Naive thymus-derived CD8-positive, alpha-beta T cell (primary cell): ENCODE measurements at regions of chr12 and their contacts with region 1.

Region 1: DNA sequence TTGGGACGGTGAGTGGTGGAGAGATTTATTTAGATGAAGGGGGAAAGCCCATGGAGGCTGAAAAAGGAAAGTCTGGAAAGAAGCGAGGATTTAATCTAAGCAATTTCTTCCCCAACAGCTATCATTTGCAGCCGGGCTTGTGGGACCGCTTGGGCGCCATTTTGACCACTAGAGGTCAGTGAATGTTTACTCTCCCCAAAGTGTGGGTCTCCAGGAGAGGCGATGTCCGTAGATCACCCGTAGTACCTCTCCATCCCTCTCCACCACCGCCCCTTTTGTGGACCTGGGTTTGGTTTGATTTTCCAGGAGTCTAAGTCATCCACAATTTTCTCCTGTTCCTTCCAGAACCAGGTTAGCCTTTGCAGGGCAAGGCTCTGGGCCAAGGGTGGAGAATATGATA is 91.2 kb upstream of the PARP11 start:
- DNase-seq: no peak
- ATAC-seq: no peak
- H3K4me3 Mint-ChIP-seq: no peak overlapping the region
- H3K27ac Mint-ChIP-seq: peak overlapping the region in 5 of 10 donors; percentile 1 to 81 (median 48)
- H3K4me1 Mint-ChIP-seq: peaks cover 19 to 34% (median 25%) of the 10 kb centered on the region in 4 donors
- H3K27me3 Mint-ChIP-seq: no peaks in the 10 kb centered on the region

Region 2: DNA sequence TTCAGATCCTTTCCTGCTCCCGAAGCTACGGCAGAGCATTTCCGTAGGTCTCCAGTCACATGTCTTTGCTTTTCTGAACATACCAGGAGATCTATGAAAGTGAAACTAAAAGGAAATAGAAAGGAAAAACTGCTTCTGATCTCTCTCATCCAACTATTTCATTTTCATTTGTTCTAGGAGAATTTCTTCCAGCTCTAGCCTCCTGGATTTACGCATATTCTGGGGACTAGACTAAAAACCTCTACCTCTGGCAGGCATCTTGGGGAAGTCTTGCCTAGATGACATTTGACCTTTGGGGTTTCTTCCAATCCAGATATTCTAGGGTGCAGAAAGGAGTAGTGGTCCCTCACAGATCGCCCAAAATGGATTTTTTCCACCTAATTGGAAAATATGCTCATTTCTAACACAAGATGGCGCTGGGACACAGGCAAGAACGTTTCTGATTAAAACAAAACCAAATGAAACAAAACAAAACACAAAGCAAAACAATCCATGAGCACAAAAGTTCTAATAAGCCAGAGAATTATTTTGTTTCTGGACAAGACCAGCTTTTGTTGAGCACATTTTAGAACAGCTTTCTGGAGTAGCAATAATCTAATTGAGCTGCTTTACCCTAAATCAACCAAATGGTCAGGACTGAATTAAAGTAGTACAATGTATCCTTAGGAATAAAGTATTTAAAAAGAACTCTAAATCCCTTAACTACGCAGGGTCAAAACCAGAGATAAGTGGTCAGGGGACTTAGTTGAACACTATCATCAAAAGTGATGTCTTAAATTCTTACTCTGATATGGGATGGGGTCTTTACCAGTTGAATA is 79.0 kb before region 1 on chr12:
- POLR2A ChIA-PET with region 1: interaction called, 15 read pairs
- DNase-seq: peak in 8 of 10 donors; percentile 12 to 76 (median 58)
- ATAC-seq: peak in 1 of 2 donors; percentile 44
- H3K4me3 Mint-ChIP-seq: peak overlapping the region in 1 of 10 donors; percentile 5
- H3K27ac Mint-ChIP-seq: peak overlapping the region in 8 of 10 donors; percentile 9 to 65 (median 14)
- H3K4me1 Mint-ChIP-seq: peaks cover 4 to 13% (median 6%) of the 10 kb centered on the region in 4 donors
- H3K27me3 Mint-ChIP-seq: peaks cover 0 to 3% (median 0%) of the 10 kb centered on the region in 5 donors

Region 3: GRCh38 chr12:3947781-3948180 is 16.7 kb before region 1 on chr12:
- POLR2A ChIA-PET with region 1: interaction called, 23 read pairs
- DNase-seq: peak in 4 of 10 donors; percentile 25 to 85 (median 72)
- ATAC-seq: peak; percentile 65 to 86
- H3K4me3 Mint-ChIP-seq: peak overlapping the region in 9 of 10 donors; percentile 4 to 62 (median 51)
- H3K27ac Mint-ChIP-seq: peak overlapping the region; percentile 90 to 98 (median 96)
- H3K4me1 Mint-ChIP-seq: peaks cover 34 to 68% (median 62%) of the 10 kb centered on the region in 4 donors
- H3K27me3 Mint-ChIP-seq: no peaks in the 10 kb centered on the region

Region 4: GRCh38 chr12:4030929-4031702 is 66.7 kb after region 1 on chr12:
- POLR2A ChIA-PET with region 1: interaction called, 19 read pairs
- DNase-seq: peak; percentile 52 to 84 (median 74)
- ATAC-seq: peak; percentile 95
- H3K4me3 Mint-ChIP-seq: peak overlapping the region; percentile 68 to 88 (median 81)
- H3K27ac Mint-ChIP-seq: peak overlapping the region; percentile 28 to 94 (median 90)
- H3K4me1 Mint-ChIP-seq: peaks cover 19 to 44% (median 42%) of the 10 kb centered on the region in 4 donors
- H3K27me3 Mint-ChIP-seq: no peaks in the 10 kb centered on the region

Region 5: GRCh38 chr12:4276524-4277204 is 312.2 kb after region 1 on chr12:
- POLR2A ChIA-PET with region 1: interaction called, 16 read pairs
- DNase-seq: peak; percentile 62 to 95 (median 86)
- ATAC-seq: peak; percentile 28 to 35
- H3K4me3 Mint-ChIP-seq: peak overlapping the region; percentile 59 to 99 (median 95)
- H3K27ac Mint-ChIP-seq: peak overlapping the region; percentile 61 to 99 (median 94)
- H3K4me1 Mint-ChIP-seq: peaks cover 27 to 63% (median 60%) of the 10 kb centered on the region in 4 donors
- H3K27me3 Mint-ChIP-seq: no peaks in the 10 kb centered on the region